H1 (cell line): ENCODE measurements at regions of chr2 and their contacts with region 1.

Region 1: GRCh38 chr2:200963124-200963917 is at the start of gene ORC2:
- DNase-seq: peak; percentile 94 to 97
- H3K4me3 ChIP-seq: peak within 1 kb of the TSS; percentile 79 to 95 (median 90)
- H3K27ac ChIP-seq: peak within 1 kb of the TSS; percentile 90
- H3K4me1 ChIP-seq: peaks cover 0 to 6% (median 3%) of the 10 kb centered on the region in 4 experiments; a peak in 4 of 7 replicates
- H3K27me3 ChIP-seq: no peaks in the 10 kb centered on the region
- CTCF ChIP-seq: peak; percentile 61 to 88 (median 75)
- EP300 ChIP-seq: peak in 1 of 2 experiments; percentile 47; a peak in 1 of 3 replicates
- POLR2A ChIP-seq: peak; percentile 44 to 80
- RAD21 ChIP-seq: peak; percentile 57 to 69
- total RNA-seq, gene ORC2: 82.3 and 89.8 TPM in 2 replicates

Region 2: GRCh38 chr2:200888704-200889625 is 74.4 kb before region 1 on chr2 and contains the starts of genes NIF3L1 and PPIL3:
- CTCF ChIA-PET with region 1: no interaction called
- POLR2A ChIA-PET with region 1: interaction called, 27 read pairs
- DNase-seq: peak; percentile 92 to 94
- H3K4me3 ChIP-seq: peak within 1 kb of the TSS; percentile 81 to 100 (median 93)
- H3K27ac ChIP-seq: peak within 1 kb of the TSS; percentile 97
- H3K4me1 ChIP-seq: no peaks in the 10 kb centered on the region
- H3K27me3 ChIP-seq: no peaks in the 10 kb centered on the region
- CTCF ChIP-seq: no peak
- EP300 ChIP-seq: peak in 1 of 2 experiments; percentile 70; a peak in 1 of 3 replicates
- POLR2A ChIP-seq: peak; percentile 82 to 85; a peak in 2 of 3 replicates
- RAD21 ChIP-seq: no peak
- total RNA-seq, gene NIF3L1: 63.4 and 65.1 TPM in 2 replicates
- total RNA-seq, gene PPIL3: 30.4 and 34.1 TPM in 2 replicates

Region 3: DNA sequence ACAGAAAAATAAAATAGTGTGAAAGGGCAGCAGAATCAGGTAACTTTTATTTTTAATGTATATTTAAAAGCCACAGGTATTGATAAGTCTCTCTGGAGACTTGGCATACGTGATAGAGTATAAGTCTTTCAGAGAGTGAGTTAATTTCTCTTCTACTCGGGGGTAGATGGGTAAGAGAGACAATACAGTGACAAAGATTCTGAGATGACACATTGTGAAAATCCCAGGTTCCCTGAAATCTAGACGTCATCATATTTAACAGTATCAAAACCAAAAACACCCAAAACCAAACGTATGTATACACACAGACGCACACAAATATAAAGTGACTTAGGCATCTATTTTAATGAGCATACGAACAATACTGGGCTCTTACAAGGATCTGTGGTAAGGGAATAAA is 40.9 kb before region 1 on chr2:
- CTCF ChIA-PET with region 1: no interaction called
- POLR2A ChIA-PET with region 1: no interaction called
- DNase-seq: no peak
- H3K4me3 ChIP-seq: no peak overlapping the region
- H3K27ac ChIP-seq: no peak overlapping the region
- H3K4me1 ChIP-seq: no peaks in the 10 kb centered on the region
- H3K27me3 ChIP-seq: no peaks in the 10 kb centered on the region
- CTCF ChIP-seq: no peak
- EP300 ChIP-seq: no peak
- POLR2A ChIP-seq: no peak
- RAD21 ChIP-seq: no peak

Region 4: DNA sequence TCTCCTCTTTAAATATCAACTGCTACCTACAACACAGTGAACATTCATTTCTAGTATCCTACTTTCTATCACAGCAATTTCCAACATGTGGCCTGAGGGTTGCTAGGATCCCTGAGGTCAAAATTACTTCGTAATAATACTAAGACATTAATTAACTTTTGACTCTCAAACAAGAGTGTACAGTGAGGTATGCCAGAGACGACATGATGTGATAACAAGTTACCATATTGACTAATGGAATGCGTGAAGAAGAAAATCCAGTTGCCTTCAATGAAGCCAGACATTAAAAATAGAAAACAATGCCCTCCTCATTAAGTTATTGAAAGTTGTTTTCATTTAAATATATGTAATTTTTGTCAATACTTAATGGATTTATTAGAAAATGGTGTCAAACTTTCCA is 12.9 kb before region 1 on chr2:
- CTCF ChIA-PET with region 1: interaction called, 12 read pairs
- POLR2A ChIA-PET with region 1: interaction called, 4 read pairs
- DNase-seq: no peak
- H3K4me3 ChIP-seq: no peak overlapping the region
- H3K27ac ChIP-seq: no peak overlapping the region
- H3K4me1 ChIP-seq: no peaks in the 10 kb centered on the region
- H3K27me3 ChIP-seq: no peaks in the 10 kb centered on the region
- CTCF ChIP-seq: no peak
- EP300 ChIP-seq: no peak
- POLR2A ChIP-seq: no peak
- RAD21 ChIP-seq: no peak

Region 5: GRCh38 chr2:200975672-200976071 is 12.4 kb after region 1 on chr2:
- CTCF ChIA-PET with region 1: interaction called, 22 read pairs
- POLR2A ChIA-PET with region 1: interaction called, 32 read pairs
- DNase-seq: no peak
- H3K4me3 ChIP-seq: no peak overlapping the region
- H3K27ac ChIP-seq: no peak overlapping the region
- H3K4me1 ChIP-seq: no peaks in the 10 kb centered on the region
- H3K27me3 ChIP-seq: no peaks in the 10 kb centered on the region
- CTCF ChIP-seq: no peak
- EP300 ChIP-seq: no peak
- POLR2A ChIP-seq: no peak
- RAD21 ChIP-seq: no peak

Region 6: DNA sequence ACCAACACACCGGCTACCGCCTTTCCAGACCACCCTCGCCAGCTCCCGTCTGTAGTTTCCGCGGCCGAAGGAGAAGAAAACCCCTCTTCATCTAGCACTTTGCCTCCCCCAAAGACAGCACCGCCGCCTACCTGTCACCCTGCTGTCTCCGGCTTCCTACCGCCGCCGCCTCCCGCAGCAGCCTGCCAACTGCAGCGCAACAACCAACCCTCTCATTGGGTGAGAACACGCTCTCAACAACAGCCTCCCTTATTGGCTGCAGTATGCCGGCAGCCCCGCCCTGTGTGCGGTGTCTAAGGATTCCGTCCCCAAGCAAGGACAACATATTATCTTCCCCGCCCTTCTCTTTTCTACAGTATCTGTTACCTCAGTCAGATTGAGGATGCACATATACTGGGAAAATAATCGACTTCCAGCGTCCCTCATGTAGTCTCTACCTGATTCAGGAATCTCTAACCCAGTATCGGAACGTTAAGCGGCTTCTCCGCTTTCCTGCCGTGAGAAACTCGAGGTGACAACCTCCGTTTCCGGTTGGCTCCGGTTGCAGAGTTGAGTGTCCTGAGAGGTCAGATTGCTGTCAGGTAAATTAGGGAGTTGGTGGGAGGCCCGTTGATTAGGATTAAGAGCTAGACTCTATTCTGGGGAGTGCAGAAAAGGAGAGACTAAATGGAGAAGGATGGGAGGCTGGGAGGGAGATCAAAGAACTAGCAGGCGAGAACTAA is 108.3 kb after region 1 on chr2 and contains the starts of genes HYCC2 and NDUFB3:
- CTCF ChIA-PET with region 1: interaction called, 102 read pairs
- POLR2A ChIA-PET with region 1: interaction called, 6 read pairs
- DNase-seq: peak; percentile 85 to 90
- H3K4me3 ChIP-seq: peak within 1 kb of the TSS; percentile 82 to 99 (median 87)
- H3K27ac ChIP-seq: peak within 1 kb of the TSS; percentile 98
- H3K4me1 ChIP-seq: peaks cover 0 to 3% (median 0%) of the 10 kb centered on the region in 4 experiments; a peak in 2 of 7 replicates
- H3K27me3 ChIP-seq: no peaks in the 10 kb centered on the region
- CTCF ChIP-seq: peak; percentile 5 to 28 (median 24)
- EP300 ChIP-seq: peak in 1 of 2 experiments; percentile 11; a peak in 1 of 3 replicates
- POLR2A ChIP-seq: peak in 1 of 2 experiments; percentile 64; a peak in 1 of 3 replicates
- RAD21 ChIP-seq: peak in 1 of 2 experiments; percentile 19; a peak in 2 of 4 replicates
- total RNA-seq, gene HYCC2: 7.8 and 8.0 TPM in 2 replicates
- total RNA-seq, gene NDUFB3: 55.3 and 57.5 TPM in 2 replicates

Region 7: DNA sequence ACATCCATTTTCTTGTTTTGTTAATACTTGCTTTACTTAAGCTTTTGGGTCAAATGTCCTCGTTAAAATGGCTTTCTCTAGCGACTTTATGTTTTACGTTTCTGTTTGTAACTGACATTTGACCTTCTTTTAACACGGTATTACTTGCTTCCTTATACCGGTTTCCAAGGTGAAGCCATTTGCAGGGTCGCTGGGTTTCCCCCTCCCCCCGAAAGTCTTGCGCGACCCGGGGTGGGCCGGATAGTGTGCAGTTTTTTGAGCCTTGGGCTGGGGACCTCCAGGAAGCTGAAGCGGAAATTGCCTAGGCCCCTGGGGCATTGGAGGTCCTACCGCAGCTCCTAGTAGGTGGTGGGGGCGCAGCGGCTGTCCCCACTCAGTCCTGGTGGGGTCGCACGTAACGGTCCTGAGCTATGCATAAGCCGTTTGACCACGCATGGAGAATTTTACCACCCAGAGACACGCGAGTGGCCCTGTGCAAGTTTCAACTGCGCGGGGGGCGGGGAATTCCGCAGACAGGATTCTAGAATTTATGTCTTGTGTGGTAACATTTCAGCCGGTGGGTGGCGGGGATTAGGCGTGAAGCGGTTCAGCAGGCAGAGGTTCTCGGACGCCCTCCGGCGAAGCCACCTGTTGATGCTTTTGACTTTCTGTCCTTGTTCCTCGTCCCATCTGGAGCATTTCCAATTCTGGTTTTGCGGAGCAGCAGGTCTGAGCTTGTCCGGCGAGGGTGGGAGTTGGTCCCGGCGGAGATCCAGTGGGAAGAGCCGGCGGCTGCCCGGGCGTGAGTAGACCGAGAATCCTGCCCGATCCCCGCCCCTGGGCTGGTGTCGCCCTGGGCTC is 155.0 kb after region 1 on chr2:
- CTCF ChIA-PET with region 1: interaction called, 9 read pairs
- POLR2A ChIA-PET with region 1: interaction called, 16 read pairs
- DNase-seq: peak in 1 of 2 experiments; percentile 52
- H3K4me3 ChIP-seq: peak overlapping the region; percentile 31 to 67 (median 54)
- H3K27ac ChIP-seq: no peak overlapping the region
- H3K4me1 ChIP-seq: peaks cover 4 to 11% (median 7%) of the 10 kb centered on the region in 4 experiments
- H3K27me3 ChIP-seq: no peaks in the 10 kb centered on the region
- CTCF ChIP-seq: peak; percentile 12 to 42 (median 22)
- EP300 ChIP-seq: no peak
- POLR2A ChIP-seq: no peak; a peak in 1 of 3 replicates
- RAD21 ChIP-seq: peak; percentile 16 to 26; a peak in 2 of 4 replicates

Region 8: DNA sequence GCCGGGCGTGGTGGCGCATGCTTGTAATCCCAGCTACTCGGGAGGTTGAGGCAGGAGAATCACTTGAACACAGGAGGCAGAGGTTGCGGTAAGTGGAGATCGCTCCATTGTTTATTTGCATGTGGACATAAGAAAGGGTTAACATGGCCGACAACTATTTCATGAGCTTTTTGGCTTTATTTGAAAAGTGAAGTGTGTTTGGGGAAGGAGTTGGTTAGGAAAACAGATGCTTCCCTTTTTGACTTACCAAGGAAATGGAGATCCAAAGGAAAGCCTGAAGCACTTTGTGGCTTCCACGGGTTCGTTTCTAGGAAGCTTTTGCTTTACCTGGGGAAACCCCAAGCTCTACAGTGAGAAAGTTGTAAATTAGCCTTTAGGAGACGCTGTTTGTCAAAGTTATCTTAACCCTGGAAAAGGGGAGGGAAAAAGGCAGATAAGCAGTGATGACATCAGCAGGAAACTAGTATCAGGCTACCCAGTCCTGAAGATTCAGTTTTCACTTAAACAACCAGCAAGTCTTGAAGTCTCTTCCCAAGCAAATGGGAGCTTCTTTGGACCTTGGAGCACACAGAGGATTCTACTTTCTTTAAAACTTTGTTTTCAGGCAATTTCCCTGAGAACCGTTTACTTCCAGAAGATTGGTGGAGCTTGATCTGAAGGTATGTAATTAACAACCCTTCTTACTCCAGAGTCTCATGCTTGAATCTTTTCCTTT is 219.5 kb after region 1 on chr2 and contains the start of gene CASP10:
- CTCF ChIA-PET with region 1: interaction called, 49 read pairs
- POLR2A ChIA-PET with region 1: interaction called, 4 read pairs
- DNase-seq: no peak
- H3K4me3 ChIP-seq: peak within 1 kb of the TSS in 3 of 4 experiments; percentile 5 to 47 (median 17); a peak in 4 of 8 replicates
- H3K27ac ChIP-seq: peak within 1 kb of the TSS; percentile 46; the same call in 1 of the 2 replicates
- H3K4me1 ChIP-seq: no peaks in the 10 kb centered on the region
- H3K27me3 ChIP-seq: no peaks in the 10 kb centered on the region
- CTCF ChIP-seq: peak in 2 of 3 experiments; percentile 43 to 60; a peak in 3 of 4 replicates
- EP300 ChIP-seq: no peak
- POLR2A ChIP-seq: peak in 1 of 2 experiments; percentile 58; a peak in 1 of 3 replicates
- RAD21 ChIP-seq: peak; percentile 63 to 71
- total RNA-seq, gene CASP10: 4.0 and 4.2 TPM in 2 replicates